Body of pancreas (tissue), 4 donors: ENCODE measurements at regions of chr20 and their contacts with region 1.

Region 1: DNA sequence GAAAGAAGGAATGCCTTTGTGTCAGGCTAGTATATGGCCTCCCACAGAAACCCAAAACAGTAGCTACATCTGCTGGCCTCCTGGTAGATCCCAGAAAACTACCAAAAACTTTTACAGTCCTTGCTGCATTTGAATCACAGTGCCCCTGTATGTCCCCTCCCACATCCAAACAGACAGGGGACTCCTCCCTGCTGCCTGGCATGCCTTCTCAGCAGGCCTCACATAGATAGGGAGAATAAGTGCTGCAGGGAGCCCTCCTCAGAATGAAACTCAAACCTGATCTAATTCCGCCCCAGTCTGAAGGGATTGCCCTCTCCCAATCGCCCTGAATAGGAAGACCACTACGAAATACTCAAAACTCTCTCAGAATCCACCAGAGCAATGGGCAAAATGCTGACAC is 14.1 kb upstream of the DEFB116 start:
- DNase-seq: no peak
- ATAC-seq: no peak
- H3K4me3 ChIP-seq: no peak overlapping the region
- H3K27ac ChIP-seq: no peak overlapping the region
- H3K4me1 ChIP-seq: no peaks in the 10 kb centered on the region
- H3K27me3 ChIP-seq: no peaks in the 10 kb centered on the region
- CTCF ChIP-seq: no peak
- POLR2A ChIP-seq: no peak

Region 2: GRCh38 chr20:30937790-30938189 is 384.7 kb before region 1 on chr20:
- intact Hi-C with region 1: no loop called
- DNase-seq: no peak
- ATAC-seq: no peak
- H3K4me3 ChIP-seq: no peak overlapping the region
- H3K27ac ChIP-seq: no peak overlapping the region
- H3K4me1 ChIP-seq: no peaks in the 10 kb centered on the region
- H3K27me3 ChIP-seq: no peaks in the 10 kb centered on the region
- CTCF ChIP-seq: no peak
- POLR2A ChIP-seq: no peak

Region 3: GRCh38 chr20:31257364-31257763 is 65.1 kb before region 1 on chr20 and contains the start of gene DEFB115:
- intact Hi-C with region 1: loop called (anchors 10 kb)
- DNase-seq: no peak
- ATAC-seq: no peak
- H3K4me3 ChIP-seq: no peak within 1 kb of the TSS
- H3K27ac ChIP-seq: no peak within 1 kb of the TSS
- H3K4me1 ChIP-seq: no peaks in the 10 kb centered on the region
- H3K27me3 ChIP-seq: no peaks in the 10 kb centered on the region
- CTCF ChIP-seq: no peak
- POLR2A ChIP-seq: no peak
- total RNA-seq, gene DEFB115: not detected

Region 4: DNA sequence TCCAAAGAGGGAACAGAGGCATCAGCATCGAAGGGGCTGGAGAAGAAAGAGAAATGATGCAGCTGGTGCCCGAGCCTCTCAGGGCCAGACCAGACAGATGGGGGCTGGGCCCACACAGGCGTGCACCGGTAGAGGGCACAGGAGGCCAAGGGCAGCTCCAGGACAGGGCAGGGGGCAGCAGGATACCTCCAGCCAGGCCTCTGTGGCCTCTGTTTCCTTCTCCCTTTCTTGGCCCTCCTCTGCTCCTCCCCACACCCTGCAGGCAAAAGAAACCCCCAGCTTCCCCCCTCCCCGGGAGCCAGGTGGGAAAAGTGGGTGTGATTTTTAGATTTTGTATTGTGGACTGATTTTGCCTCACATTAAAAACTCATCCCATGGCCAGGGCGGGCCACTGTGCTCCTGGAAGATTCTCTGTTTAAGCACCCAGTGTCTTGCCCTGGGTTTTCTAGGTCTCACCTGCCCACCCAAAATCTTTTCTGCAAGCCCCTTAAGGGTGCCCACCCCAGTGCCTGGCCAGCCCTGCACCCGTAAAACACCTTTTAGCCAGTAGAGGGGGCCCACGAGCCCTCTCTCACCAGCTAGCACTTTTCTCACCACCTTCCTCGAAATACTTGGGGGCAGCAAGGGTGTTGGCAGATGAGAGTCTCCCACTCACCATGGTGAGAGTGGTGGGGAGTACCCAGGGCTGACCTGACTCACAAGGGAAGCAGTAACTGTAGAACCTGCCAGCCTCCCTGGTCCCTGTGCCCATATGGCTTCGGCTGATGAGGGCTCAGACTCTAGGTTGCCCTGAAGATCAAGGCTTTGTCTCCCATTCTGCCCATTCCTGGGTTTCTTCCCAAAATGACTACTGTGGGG is 246.9 kb after region 1 on chr20:
- intact Hi-C with region 1: no loop called
- DNase-seq: peak; percentile 45 to 65 (median 57)
- ATAC-seq: no peak
- H3K4me3 ChIP-seq: no peak overlapping the region
- H3K27ac ChIP-seq: peak overlapping the region in 3 of 4 donors; percentile 2 to 94 (median 93)
- H3K4me1 ChIP-seq: peaks cover 30% of the 10 kb centered on the region
- H3K27me3 ChIP-seq: no peaks in the 10 kb centered on the region
- CTCF ChIP-seq: peak; percentile 44 to 80 (median 69)
- POLR2A ChIP-seq: no peak